K562 (cell line): ENCODE measurements at regions of chr6 and their contacts with region 1.

Region 1: GRCh38 chr6:134097114-134097707 is 44.8 kb upstream of the SLC2A12 start:
- DNase-seq: peak; percentile 55 to 84 (median 65)
- ATAC-seq: peak; percentile 88
- H3K4me3 ChIP-seq: no peak overlapping the region
- H3K27ac ChIP-seq: no peak overlapping the region
- H3K4me1 ChIP-seq: no peaks in the 10 kb centered on the region
- H3K27me3 ChIP-seq: no peaks in the 10 kb centered on the region; a peak in 2 of 5 replicates
- CTCF ChIP-seq: peak; percentile 70 to 86 (median 72); a peak in 5 of 6 replicates
- EP300 ChIP-seq: no peak
- POLR2A ChIP-seq: no peak
- RAD21 ChIP-seq: peak; percentile 97

Region 2: GRCh38 chr6:132962936-132963868 is 1134.0 kb before region 1 on chr6:
- CTCF ChIA-PET with region 1: no interaction called
- POLR2A ChIA-PET with region 1: no interaction called
- in situ Hi-C with region 1: no loop called
- intact Hi-C with region 1: loop called (anchors 10 kb)
- DNase-seq: peak; percentile 58 to 77 (median 63)
- ATAC-seq: peak; percentile 95
- H3K4me3 ChIP-seq: no peak overlapping the region
- H3K27ac ChIP-seq: no peak overlapping the region
- H3K4me1 ChIP-seq: peaks cover 0 to 17% of the 10 kb centered on the region in 2 experiments; a peak in 3 of 5 replicates
- H3K27me3 ChIP-seq: no peaks in the 10 kb centered on the region
- CTCF ChIP-seq: peak; percentile 77 to 84 (median 80)
- EP300 ChIP-seq: no peak
- POLR2A ChIP-seq: no peak
- RAD21 ChIP-seq: peak; percentile 79 to 83

Region 3: GRCh38 chr6:133568970-133569889 is 528.0 kb before region 1 on chr6:
- CTCF ChIA-PET with region 1: interaction called, 9 read pairs
- POLR2A ChIA-PET with region 1: no interaction called
- in situ Hi-C with region 1: no loop called
- intact Hi-C with region 1: loop called (anchors 2 kb)
- DNase-seq: peak; percentile 44 to 63 (median 52)
- ATAC-seq: peak; percentile 93
- H3K4me3 ChIP-seq: no peak overlapping the region
- H3K27ac ChIP-seq: no peak overlapping the region
- H3K4me1 ChIP-seq: no peaks in the 10 kb centered on the region; a peak in 1 of 5 replicates
- H3K27me3 ChIP-seq: no peaks in the 10 kb centered on the region; a peak in 1 of 5 replicates
- CTCF ChIP-seq: peak; percentile 71 to 85 (median 72); a peak in 5 of 6 replicates
- EP300 ChIP-seq: no peak
- POLR2A ChIP-seq: no peak
- RAD21 ChIP-seq: peak; percentile 93 to 97

Region 4: GRCh38 chr6:133837801-133838349 is 259.3 kb before region 1 on chr6:
- CTCF ChIA-PET with region 1: interaction called, 3 read pairs
- POLR2A ChIA-PET with region 1: no interaction called
- in situ Hi-C with region 1: no loop called
- intact Hi-C with region 1: loop called (anchors 5 kb)
- DNase-seq: peak; percentile 61 to 83 (median 68)
- ATAC-seq: peak; percentile 99
- H3K4me3 ChIP-seq: peak overlapping the region; percentile 67
- H3K27ac ChIP-seq: no peak overlapping the region
- H3K4me1 ChIP-seq: peaks cover 0 to 5% of the 10 kb centered on the region in 2 experiments; a peak in 2 of 5 replicates
- H3K27me3 ChIP-seq: no peaks in the 10 kb centered on the region; a peak in 1 of 5 replicates
- CTCF ChIP-seq: peak; percentile 80 to 90 (median 89)
- EP300 ChIP-seq: no peak
- POLR2A ChIP-seq: no peak
- RAD21 ChIP-seq: peak; percentile 58 to 66

Region 5: DNA sequence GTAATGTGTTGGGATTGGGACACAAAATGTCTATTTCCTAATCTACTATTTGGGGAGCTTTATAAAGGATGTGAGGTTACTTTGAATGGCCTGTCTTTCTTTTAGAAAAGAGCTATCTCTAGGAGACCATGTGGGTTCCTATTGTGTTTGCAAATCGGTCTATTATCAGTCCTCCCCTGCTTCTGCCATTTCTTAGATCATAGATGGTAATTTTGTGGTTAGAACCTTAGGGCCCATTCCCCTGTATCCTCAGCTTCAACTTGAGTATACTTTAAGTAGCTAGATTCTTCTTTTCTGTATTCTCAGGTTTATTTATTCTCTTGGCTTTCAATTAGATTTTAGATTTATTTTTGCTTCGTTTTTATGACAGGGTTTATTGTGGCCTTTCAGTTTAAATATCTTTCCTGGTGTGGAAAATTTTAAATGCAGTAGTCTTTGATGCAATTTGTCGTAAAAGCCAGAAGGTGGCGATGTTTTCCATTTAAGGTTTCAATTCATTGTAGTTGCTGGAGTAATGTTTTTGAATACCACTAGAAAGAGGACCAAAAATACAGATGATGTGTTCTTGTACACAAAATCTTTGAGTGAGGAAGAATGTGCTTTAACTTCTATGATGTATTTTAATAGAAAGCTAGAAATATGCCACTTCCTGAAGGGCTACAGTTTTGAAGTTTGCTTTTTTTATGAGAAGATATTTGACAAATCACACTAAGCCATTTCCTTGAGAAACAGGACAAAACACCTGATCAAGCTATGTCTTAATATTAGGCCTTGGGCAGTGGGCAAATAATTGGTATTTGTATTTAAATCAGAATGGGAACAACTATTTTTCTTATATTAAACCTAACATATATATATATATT is 123.9 kb before region 1 on chr6:
- CTCF ChIA-PET with region 1: interaction called, 16 read pairs
- POLR2A ChIA-PET with region 1: no interaction called
- in situ Hi-C with region 1: no loop called
- intact Hi-C with region 1: loop called (anchors 1 kb)
- DNase-seq: peak; percentile 35 to 74 (median 54)
- ATAC-seq: peak; percentile 81
- H3K4me3 ChIP-seq: no peak overlapping the region
- H3K27ac ChIP-seq: peak overlapping the region; percentile 67
- H3K4me1 ChIP-seq: peaks cover 3 to 20% of the 10 kb centered on the region in 2 experiments; a peak in 3 of 5 replicates
- H3K27me3 ChIP-seq: no peaks in the 10 kb centered on the region
- CTCF ChIP-seq: peak; percentile 56 to 83 (median 62); a peak in 5 of 6 replicates
- EP300 ChIP-seq: peak; percentile 36; the same call in 1 of the 2 replicates
- POLR2A ChIP-seq: no peak; the same call in 1 of the 2 replicates
- RAD21 ChIP-seq: peak; percentile 77 to 85